ENCODE measurements at regions of chr4 and their contacts with region 1.

Region 1: DNA sequence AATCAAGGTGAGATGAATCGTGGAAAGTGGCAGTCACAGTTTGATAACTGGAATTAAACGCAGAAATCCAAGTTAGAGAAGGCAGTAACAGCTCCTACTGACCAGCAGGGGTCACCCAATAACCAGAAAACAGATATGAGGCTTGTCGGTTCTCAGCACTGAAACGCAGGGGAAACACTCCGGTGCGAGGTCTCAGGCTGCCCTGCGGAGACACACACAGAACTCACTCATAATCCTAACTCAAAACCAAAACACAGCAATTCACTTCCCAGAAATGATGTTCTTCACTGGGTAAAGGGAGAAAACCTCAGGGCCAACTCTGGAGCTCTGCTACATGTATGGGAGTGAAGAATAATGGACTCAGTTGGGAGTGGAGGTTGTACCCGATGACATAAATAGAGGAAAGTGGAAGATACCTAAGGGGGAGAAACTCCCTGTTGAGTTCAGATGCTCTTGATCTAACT is 384.4 kb downstream of the RAPGEF2 start:
- DNase-seq: peak; percentile 17
- ATAC-seq: peak; percentile 98
- H3K4me3 ChIP-seq: no peak overlapping the region
- H3K27ac ChIP-seq: no peak overlapping the region
- H3K4me1 ChIP-seq: no peaks in the 10 kb centered on the region
- H3K27me3 ChIP-seq: no peaks in the 10 kb centered on the region; a peak in 1 of 4 replicates
- CTCF ChIP-seq: peak; percentile 75 to 80 (median 75)
- EP300 ChIP-seq: no peak
- POLR2A ChIP-seq: no peak
- RAD21 ChIP-seq: peak; percentile 76

Region 2: DNA sequence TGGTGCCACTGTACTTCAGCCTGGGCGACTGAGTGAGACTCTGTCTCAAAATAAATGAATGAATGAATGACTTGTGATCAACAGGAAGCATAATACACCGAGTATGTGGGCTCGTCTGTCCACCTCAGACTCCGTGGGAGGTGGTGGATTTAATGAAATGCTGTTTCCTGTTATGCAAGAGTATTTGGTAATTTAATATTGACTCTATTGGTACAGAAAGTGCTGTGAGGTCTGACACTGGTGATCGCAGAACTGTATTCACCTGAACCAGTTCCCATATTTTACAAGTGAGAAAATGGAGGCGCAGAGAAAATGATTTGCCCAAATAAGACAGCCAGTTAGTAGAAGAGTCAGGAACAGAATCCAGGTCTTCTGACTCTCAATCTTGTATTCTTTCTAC is 38.9 kb after region 1 on chr4:
- CTCF ChIA-PET with region 1: no interaction called
- POLR2A ChIA-PET with region 1: no interaction called
- RAD21 ChIA-PET with region 1: no interaction called
- SMC1A ChIA-PET with region 1: no interaction called
- in situ Hi-C with region 1: no loop called
- intact Hi-C with region 1: no loop called
- DNase-seq: no peak
- ATAC-seq: no peak
- H3K4me3 ChIP-seq: no peak overlapping the region
- H3K27ac ChIP-seq: no peak overlapping the region
- H3K4me1 ChIP-seq: no peaks in the 10 kb centered on the region
- H3K27me3 ChIP-seq: no peaks in the 10 kb centered on the region
- CTCF ChIP-seq: no peak
- EP300 ChIP-seq: no peak
- POLR2A ChIP-seq: no peak
- RAD21 ChIP-seq: no peak

Region 3: DNA sequence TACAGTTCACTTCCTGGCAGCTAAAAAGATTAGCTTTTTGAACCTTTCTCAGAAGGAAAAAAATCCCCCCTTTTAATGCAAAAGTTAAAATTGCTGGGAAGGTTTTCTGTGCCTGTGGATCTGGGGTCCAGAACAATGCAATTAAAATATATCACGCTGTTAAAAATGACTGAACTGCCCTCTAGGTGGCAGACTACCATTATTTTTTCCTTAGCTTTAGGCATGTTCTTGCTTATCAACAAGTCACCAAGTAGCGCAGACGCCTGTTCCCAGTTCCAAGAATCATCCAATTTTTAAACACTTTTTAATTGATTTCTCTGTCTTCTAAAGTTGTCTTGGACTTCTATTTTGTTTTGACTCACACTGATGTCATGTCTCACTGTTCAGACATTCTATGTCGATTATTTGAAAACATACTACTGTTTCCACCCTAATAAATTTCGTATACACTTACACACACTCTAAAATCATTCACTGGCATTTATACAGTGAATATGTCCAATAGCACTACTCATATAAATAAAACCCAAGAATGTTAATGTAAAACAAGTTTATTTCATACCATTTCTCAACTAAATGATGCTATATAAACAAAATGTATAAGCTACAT is 277.1 kb after region 1 on chr4:
- CTCF ChIA-PET with region 1: interaction called, 8 read pairs
- POLR2A ChIA-PET with region 1: no interaction called
- RAD21 ChIA-PET with region 1: no interaction called
- SMC1A ChIA-PET with region 1: no interaction called
- in situ Hi-C with region 1: no loop called
- intact Hi-C with region 1: loop called (anchors 5 kb)
- DNase-seq: no peak
- ATAC-seq: peak; percentile 84
- H3K4me3 ChIP-seq: no peak overlapping the region
- H3K27ac ChIP-seq: no peak overlapping the region
- H3K4me1 ChIP-seq: no peaks in the 10 kb centered on the region
- H3K27me3 ChIP-seq: no peaks in the 10 kb centered on the region
- CTCF ChIP-seq: peak; percentile 51 to 63 (median 58); a peak in 5 of 6 replicates
- EP300 ChIP-seq: no peak
- POLR2A ChIP-seq: no peak
- RAD21 ChIP-seq: peak; percentile 61

Measured in GM12878 (cell line).